ENCODE measurements at regions of chr12 and their contacts with region 1.

Region 1: GRCh38 chr12:52879394-52880351 is 25.2 kb downstream of the KRT8 start:
- DNase-seq: peak; percentile 78
- H3K27ac ChIP-seq: peak overlapping the region; percentile 100
- CTCF ChIP-seq: peak; percentile 82

Region 2: GRCh38 chr12:52147367-52147972 is 732.2 kb before region 1 on chr12:
- CTCF ChIA-PET with region 1: interaction called, 20 read pairs
- POLR2A ChIA-PET with region 1: interaction called, 3 read pairs
- DNase-seq: peak; percentile 93
- H3K27ac ChIP-seq: peak overlapping the region; percentile 100
- CTCF ChIP-seq: no peak

Region 3: GRCh38 chr12:52372216-52373154 is 507.2 kb before region 1 on chr12:
- CTCF ChIA-PET with region 1: interaction called, 25 read pairs
- POLR2A ChIA-PET with region 1: interaction called, 3 read pairs
- DNase-seq: peak; percentile 90
- H3K27ac ChIP-seq: peak overlapping the region; percentile 53
- CTCF ChIP-seq: peak; percentile 88

Region 4: DNA sequence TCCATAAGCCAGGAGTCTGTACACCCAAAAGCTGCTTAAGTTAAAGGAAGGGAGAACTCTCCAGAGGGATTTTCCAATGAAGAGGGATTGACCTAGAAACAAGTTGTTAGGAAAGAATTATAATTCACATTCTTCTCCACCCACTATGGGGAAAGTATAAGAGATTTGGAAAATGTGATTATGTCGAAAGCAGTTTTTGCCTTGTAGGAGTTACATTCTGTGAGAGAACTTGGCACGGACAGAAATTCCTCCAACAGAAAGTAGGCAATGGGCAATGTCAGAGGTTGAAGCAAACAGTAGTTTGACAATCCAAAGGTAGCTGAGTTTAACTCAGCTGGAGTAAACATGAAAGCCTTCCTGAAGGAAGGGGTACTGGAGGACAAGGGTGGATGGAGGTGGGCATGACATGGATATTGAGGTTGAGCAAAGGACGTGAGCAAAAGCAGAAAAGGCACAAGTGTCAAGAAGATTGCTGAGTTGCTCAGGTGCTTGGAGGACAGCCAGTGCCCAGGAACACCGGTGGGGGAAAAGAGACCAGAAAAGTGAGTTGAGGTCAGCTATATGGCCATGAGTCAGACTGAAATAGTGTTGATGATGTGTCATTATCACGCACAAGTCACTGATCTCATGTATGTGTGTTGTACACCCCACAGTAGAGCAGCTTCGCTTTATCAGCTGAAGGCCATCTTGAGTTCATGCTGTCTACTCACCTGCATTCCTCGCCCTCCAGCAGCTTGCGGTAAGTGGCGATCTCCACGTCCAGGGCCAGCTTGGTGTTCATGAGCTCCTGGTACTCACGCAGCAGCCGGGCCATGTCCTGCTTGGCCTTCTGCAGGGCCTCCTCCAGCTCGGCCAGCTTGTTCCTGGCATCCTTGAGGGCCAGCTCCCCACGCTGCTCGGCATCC is 363.5 kb before region 1 on chr12:
- CTCF ChIA-PET with region 1: interaction called, 38 read pairs
- POLR2A ChIA-PET with region 1: interaction called, 5 read pairs
- DNase-seq: no peak
- H3K27ac ChIP-seq: peak overlapping the region; percentile 100
- CTCF ChIP-seq: no peak

Region 5: DNA sequence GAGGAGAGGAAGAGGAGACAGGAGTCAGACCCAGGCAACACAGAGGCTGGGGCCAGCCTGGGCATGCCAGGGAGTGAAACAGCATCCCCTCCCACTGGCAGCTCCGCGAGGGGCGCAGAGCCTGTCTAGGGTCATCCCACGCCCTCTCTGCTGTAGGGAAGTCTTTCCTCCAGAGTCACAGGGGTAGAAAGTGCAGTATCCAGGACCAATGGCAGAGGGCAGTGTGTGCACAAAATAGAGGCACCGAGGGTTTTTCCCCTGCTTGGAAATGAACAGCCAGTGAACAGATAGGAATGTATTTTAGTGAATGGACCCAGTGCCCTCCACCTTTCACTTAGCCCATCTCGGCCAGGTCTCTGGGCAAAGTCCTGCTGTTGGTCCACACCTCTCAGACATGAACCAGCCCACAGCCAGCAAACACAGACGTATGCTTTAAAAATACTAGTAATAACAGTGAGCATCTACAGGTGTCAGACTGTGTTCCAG is 296.7 kb before region 1 on chr12:
- CTCF ChIA-PET with region 1: interaction called, 39 read pairs
- POLR2A ChIA-PET with region 1: interaction called, 5 read pairs
- DNase-seq: peak; percentile 90
- H3K27ac ChIP-seq: peak overlapping the region; percentile 92
- CTCF ChIP-seq: peak; percentile 76

Measured in RWPE1 (cell line).